B cell (primary cell): ENCODE measurements at regions of chr14 and their contacts with region 1.

Region 1: DNA sequence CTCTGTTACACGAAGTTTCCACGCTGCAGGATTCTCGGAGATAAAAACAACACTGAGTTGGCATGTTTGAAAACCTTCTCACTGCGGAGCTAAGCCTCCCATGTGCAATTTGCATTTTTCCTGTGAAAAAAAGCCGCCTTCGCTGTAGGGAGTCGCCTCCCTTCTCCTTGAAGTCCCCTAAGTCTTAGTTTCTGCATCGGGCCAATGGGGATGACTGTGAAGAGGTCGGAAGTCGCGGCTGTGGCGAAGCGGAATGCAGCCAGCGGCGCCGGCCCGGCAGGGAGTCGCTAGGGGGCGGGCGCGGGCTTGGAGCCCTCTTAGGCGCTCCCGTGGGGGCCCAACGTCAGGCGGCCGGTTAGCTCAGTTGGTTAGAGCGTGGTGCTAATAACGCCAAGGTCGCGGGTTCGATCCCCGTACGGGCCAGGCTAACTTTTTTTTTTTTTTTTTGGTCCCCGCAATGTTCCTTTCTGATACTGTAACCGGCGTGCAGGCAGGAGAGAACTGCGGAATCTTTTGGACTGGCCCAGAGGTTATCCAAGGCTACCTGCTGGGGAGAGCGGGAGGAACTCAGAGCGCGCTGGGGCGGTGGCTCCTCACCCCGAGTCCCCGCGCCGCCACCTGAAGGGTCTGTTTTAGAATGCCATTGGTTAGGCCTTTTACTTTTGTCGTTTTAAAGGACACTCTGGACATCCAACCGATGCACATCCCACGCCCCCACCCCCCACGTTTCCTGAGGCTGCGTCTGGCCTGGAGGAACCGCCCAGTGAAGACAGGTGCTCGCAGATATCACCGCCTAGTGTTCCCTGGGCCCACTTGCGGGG is 2.6 kb upstream of the ZNF839 start:
- DNase-seq: peak; percentile 95
- ATAC-seq: peak; percentile 69
- H3K4me3 ChIP-seq: peak overlapping the region; percentile 58 to 80 (median 69)
- H3K4me3 Mint-ChIP-seq: peak overlapping the region; percentile 96
- H3K27ac ChIP-seq: peak overlapping the region; percentile 43 to 52
- H3K27ac Mint-ChIP-seq: peak overlapping the region; percentile 99
- H3K4me1 ChIP-seq: peaks cover 38 to 53% of the 10 kb centered on the region in 2 donors
- H3K4me1 Mint-ChIP-seq: peaks cover 59% of the 10 kb centered on the region
- H3K27me3 ChIP-seq: no peaks in the 10 kb centered on the region
- H3K27me3 Mint-ChIP-seq: no peaks in the 10 kb centered on the region
- CTCF ChIP-seq: peak; percentile 78

Region 2: GRCh38 chr14:101761032-101761880 is 555.7 kb before region 1 on chr14 and contains the start of gene PPP2R5C:
- CTCF ChIA-PET with region 1: interaction called, 4 read pairs
- POLR2A ChIA-PET with region 1: interaction called, 3 read pairs
- intact Hi-C with region 1: loop called (anchors 2 kb)
- DNase-seq: peak; percentile 93
- ATAC-seq: peak; percentile 63
- H3K4me3 ChIP-seq: peak within 1 kb of the TSS; percentile 73 to 96 (median 87)
- H3K4me3 Mint-ChIP-seq: peak within 1 kb of the TSS; percentile 94
- H3K27ac ChIP-seq: peak within 1 kb of the TSS; percentile 66 to 78
- H3K27ac Mint-ChIP-seq: peak within 1 kb of the TSS; percentile 92
- H3K4me1 ChIP-seq: peaks cover 11 to 12% of the 10 kb centered on the region in 2 donors
- H3K4me1 Mint-ChIP-seq: peaks cover 14% of the 10 kb centered on the region
- H3K27me3 ChIP-seq: no peaks in the 10 kb centered on the region
- H3K27me3 Mint-ChIP-seq: no peaks in the 10 kb centered on the region
- CTCF ChIP-seq: no peak
- total RNA-seq, gene PPP2R5C: 330 and 337 TPM in 2 replicates

Region 3: DNA sequence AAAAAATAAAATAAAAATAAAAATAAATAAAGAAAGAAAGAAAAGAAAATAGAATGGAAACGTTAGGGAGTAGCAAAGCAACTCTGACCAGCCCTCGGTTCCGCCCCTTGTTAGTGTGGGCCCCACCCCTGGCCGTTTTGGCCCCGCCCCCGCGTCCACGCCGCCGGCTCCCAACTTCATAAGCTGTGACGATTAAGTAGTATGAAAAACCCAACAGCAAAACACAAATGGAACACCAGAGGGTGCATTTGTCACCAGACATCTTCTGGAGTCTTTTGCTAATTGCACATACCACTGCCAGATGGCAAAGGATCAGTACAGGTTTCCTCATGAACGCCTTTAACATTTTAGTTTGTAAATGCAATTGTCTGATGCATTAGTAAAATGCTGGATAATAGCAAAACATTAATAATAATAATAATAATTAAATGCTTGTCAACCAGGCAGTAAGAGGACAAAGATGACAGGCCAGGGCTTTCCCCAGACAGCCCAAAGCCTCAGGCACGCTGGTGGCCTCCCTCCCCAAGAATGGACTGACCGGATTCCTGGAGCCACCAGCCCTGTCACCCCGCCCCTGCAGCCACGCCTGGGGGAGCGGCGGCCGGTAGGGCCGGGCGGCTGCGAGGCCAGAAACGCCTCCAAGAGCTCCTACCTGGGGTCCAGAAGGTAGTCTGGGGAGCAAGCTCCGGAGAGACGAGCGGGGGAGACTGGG is 253.7 kb before region 1 on chr14:
- CTCF ChIA-PET with region 1: interaction called, 12 read pairs
- POLR2A ChIA-PET with region 1: no interaction called
- intact Hi-C with region 1: no loop called
- DNase-seq: peak; percentile 76
- ATAC-seq: peak; percentile 98
- H3K4me3 ChIP-seq: no peak overlapping the region
- H3K4me3 Mint-ChIP-seq: no peak overlapping the region
- H3K27ac ChIP-seq: no peak overlapping the region
- H3K27ac Mint-ChIP-seq: no peak overlapping the region
- H3K4me1 ChIP-seq: peaks cover 0 to 3% of the 10 kb centered on the region in 2 donors
- H3K4me1 Mint-ChIP-seq: peaks cover 4% of the 10 kb centered on the region
- H3K27me3 ChIP-seq: peaks cover 0 to 2% (median 0%) of the 10 kb centered on the region in 4 experiments
- H3K27me3 Mint-ChIP-seq: no peaks in the 10 kb centered on the region
- CTCF ChIP-seq: peak; percentile 49

Region 4: DNA sequence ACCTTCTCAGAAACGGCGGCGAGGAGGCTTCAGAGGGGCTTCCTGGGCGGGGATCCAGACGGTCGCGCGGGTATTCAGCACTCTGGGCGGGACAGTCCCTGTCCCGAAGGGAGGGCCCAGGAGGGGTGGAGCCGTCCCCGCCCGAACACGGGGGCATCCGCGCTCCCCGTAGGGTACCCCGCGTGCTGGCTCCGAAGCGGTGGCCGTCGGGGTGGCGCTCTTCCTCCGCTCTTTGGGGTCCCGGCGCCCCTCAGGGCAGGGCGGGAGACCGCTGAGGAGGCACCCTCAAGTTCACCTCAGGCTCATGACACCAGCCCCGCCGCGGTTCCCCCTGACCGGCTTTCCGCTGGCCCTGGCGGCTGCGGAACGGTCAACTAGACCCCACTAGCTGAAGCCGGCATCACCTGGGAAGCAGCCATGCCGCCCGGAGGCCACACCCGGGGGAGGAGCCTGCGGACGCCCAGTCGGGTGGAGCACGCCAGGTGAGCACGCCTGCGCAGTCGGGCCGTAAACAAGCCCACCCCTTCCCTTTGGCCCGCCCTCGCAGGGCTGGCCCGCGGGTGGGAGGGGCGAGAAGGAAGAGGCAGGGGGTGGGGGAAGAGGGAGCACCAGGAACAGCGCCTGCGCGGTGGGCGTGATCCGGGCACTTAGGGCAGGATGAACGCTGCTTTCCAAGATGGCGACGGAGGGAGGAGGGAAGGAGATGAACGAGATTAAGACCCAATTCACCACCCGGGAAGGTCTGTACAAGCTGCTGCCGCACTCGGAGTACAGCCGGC is 177.5 kb before region 1 on chr14 and contains the start of gene WDR20:
- CTCF ChIA-PET with region 1: interaction called, 5 read pairs
- POLR2A ChIA-PET with region 1: no interaction called
- intact Hi-C with region 1: loop called (anchors 1 kb)
- DNase-seq: peak; percentile 98
- ATAC-seq: peak; percentile 93
- H3K4me3 ChIP-seq: peak within 1 kb of the TSS; percentile 66 to 94 (median 88)
- H3K4me3 Mint-ChIP-seq: peak within 1 kb of the TSS; percentile 89
- H3K27ac ChIP-seq: peak within 1 kb of the TSS; percentile 88 to 90
- H3K27ac Mint-ChIP-seq: peak within 1 kb of the TSS; percentile 94
- H3K4me1 ChIP-seq: peaks cover 14 to 16% of the 10 kb centered on the region in 2 donors
- H3K4me1 Mint-ChIP-seq: peaks cover 24% of the 10 kb centered on the region
- H3K27me3 ChIP-seq: no peaks in the 10 kb centered on the region
- H3K27me3 Mint-ChIP-seq: no peaks in the 10 kb centered on the region
- CTCF ChIP-seq: no peak
- total RNA-seq, gene WDR20: 62.8 and 64.0 TPM in 2 replicates

Region 5: GRCh38 chr14:102304611-102305509 is 12.1 kb before region 1 on chr14 and contains the start of gene MOK:
- CTCF ChIA-PET with region 1: interaction called, 48 read pairs
- POLR2A ChIA-PET with region 1: interaction called, 4 read pairs
- intact Hi-C with region 1: loop called (anchors 1 kb)
- DNase-seq: peak; percentile 98
- ATAC-seq: peak; percentile 90
- H3K4me3 ChIP-seq: peak within 1 kb of the TSS; percentile 80 to 82 (median 81)
- H3K4me3 Mint-ChIP-seq: peak within 1 kb of the TSS; percentile 94
- H3K27ac ChIP-seq: peak within 1 kb of the TSS; percentile 72 to 89
- H3K27ac Mint-ChIP-seq: peak within 1 kb of the TSS; percentile 96
- H3K4me1 ChIP-seq: peaks cover 5 to 11% of the 10 kb centered on the region in 2 donors
- H3K4me1 Mint-ChIP-seq: peaks cover 6% of the 10 kb centered on the region
- H3K27me3 ChIP-seq: no peaks in the 10 kb centered on the region
- H3K27me3 Mint-ChIP-seq: no peaks in the 10 kb centered on the region
- CTCF ChIP-seq: no peak
- total RNA-seq, gene MOK: 2.9 and 3.0 TPM in 2 replicates

Region 6: DNA sequence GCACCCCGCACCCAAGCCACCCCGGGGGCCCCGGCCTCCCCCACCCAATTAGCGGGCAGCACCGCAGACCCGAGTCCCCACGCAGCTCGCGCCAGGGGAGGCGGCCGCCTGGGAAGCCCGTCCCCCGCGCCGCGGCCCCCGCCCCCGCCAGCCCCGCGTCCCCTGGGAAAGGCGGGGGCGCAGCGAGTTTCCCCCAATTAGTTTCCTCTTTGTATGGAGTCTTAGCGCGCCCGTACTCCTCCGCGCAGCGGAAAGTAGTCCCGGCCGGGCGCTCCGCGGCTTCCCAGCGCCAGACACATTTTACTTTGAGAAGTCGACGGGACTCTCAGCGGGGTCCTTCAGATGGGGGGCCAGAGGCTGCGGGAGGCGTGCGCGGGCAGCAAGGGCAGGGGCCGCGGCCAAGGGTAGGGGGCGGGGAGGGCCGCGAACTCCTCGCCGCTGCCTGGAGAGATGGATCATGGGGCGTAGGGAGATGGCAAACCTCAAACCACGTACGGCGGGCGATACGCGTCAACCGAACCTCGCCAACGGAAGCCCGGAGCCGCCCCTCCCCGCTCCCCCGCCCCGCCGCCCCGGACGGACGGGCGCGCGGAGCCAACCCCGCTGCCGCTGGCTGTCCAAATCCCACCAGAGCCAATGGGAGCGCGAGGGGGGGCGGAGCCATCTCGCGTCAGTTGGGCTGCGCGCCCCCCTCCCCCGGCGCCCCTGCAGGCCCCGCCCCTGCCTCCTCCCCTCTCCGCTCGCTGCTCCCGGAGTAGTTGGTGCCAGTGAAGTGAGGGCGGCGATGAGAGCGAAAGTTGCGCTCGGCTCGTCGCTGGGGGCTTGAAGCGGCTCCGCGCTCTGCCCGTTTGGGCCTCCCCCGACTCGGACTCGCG is 275.2 kb after region 1 on chr14 and contains the start of gene RCOR1:
- CTCF ChIA-PET with region 1: interaction called, 3 read pairs
- POLR2A ChIA-PET with region 1: no interaction called
- intact Hi-C with region 1: loop called (anchors 5 kb)
- DNase-seq: peak; percentile 97
- ATAC-seq: peak; percentile 82
- H3K4me3 ChIP-seq: peak within 1 kb of the TSS; percentile 73 to 91 (median 83)
- H3K4me3 Mint-ChIP-seq: peak within 1 kb of the TSS; percentile 89
- H3K27ac ChIP-seq: peak within 1 kb of the TSS; percentile 82 to 95
- H3K27ac Mint-ChIP-seq: peak within 1 kb of the TSS; percentile 97
- H3K4me1 ChIP-seq: peaks cover 10 to 22% of the 10 kb centered on the region in 2 donors
- H3K4me1 Mint-ChIP-seq: peaks cover 26% of the 10 kb centered on the region
- H3K27me3 ChIP-seq: no peaks in the 10 kb centered on the region
- H3K27me3 Mint-ChIP-seq: no peaks in the 10 kb centered on the region
- CTCF ChIP-seq: no peak
- total RNA-seq, gene RCOR1: 37.1 and 38.4 TPM in 2 replicates